Endothelial cell of umbilical vein (primary cell): ENCODE measurements at regions of chr12 and their contacts with region 1.

Region 1: DNA sequence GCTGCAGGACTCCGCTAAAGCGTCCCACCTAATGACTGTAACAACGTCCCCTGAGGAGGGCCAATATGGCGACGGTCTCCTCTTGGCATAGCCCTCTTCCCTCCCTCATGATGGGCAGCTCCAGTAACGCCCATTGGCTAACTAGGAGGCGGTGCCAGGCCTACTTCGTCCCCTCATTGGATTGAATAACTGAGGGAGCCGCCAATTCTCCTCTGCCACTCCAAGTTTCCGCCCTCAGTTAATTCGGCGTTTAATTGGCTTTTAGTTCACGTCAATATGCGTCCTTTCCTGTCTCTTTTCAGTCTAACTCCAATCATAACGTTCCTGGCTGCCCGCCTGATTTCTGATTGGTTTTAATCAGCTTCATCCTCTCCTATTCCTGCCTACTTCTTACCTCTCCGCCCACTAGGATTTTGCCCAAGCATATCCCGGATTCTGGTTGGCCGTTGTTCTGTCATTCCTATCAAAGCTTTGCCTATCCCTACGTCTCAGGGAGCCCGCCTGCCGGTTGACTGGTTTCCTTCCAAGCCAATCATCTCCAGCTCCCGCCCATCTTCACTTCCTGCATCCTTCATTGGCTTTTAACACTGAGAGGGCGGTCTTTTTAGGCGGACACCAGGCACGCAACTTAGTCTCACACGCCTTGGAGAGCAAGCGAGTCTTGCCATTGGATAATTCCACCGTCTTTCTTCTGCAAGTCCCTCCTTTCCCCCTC is 430 bp upstream of the SP1 start:
- DNase-seq: peak; percentile 100
- H3K4me3 ChIP-seq: peak overlapping the region; percentile 4 to 55 (median 47)
- H3K27ac ChIP-seq: peak overlapping the region; percentile 58
- H3K4me1 ChIP-seq: peaks cover 30% of the 10 kb centered on the region
- H3K27me3 ChIP-seq: no peaks in the 10 kb centered on the region
- CTCF ChIP-seq: no peak
- POLR2A ChIP-seq: peak; percentile 90

Region 2: GRCh38 chr12:53190108-53190729 is 189.3 kb before region 1 on chr12:
- CTCF ChIA-PET with region 1: no interaction called
- POLR2A ChIA-PET with region 1: no interaction called
- dilution Hi-C with region 1: no loop called
- intact Hi-C with region 1: no loop called
- DNase-seq: peak; percentile 49
- H3K4me3 ChIP-seq: no peak overlapping the region
- H3K27ac ChIP-seq: no peak overlapping the region
- H3K4me1 ChIP-seq: peaks cover 4% of the 10 kb centered on the region
- H3K27me3 ChIP-seq: no peaks in the 10 kb centered on the region
- CTCF ChIP-seq: peak; percentile 73 to 86
- POLR2A ChIP-seq: no peak

Region 3: DNA sequence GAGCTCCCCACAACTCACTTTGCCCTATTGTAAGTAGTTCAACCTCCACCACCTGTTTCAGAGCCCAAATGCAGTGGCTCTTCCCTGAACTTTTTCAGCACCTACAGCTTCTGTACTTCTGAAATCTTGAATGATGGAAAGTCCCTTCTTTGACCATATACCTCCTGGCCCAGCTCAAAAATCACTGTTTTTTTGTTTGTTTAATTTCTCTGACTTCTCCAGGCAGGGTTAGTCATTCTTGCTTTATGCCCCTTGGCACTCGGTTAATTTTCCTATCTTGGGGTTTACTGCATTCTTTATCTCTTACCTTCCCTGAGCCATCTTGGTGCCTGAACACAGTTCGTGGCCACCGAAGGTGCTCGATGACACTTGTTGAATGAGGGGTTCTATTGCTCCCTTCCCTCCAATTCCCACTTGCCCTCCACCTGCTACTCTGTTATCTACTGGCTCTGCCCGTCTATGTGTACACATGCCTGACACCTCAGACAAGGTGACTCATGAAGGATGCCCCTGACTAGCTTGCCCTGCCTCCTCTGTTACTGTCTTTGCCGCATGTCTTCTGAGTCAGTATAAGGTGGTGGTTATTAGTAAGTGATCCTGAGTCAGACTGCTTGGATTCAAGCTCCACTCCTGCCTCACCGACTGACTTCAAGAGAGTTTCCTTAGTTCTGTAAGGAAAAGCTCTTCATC is 48.5 kb after region 1 on chr12:
- CTCF ChIA-PET with region 1: interaction called, 44 read pairs
- POLR2A ChIA-PET with region 1: no interaction called
- dilution Hi-C with region 1: no loop called
- intact Hi-C with region 1: no loop called
- DNase-seq: no peak
- H3K4me3 ChIP-seq: no peak overlapping the region
- H3K27ac ChIP-seq: no peak overlapping the region
- H3K4me1 ChIP-seq: no peaks in the 10 kb centered on the region
- H3K27me3 ChIP-seq: no peaks in the 10 kb centered on the region
- CTCF ChIP-seq: no peak
- POLR2A ChIP-seq: no peak

Region 4: GRCh38 chr12:53441040-53441833 is 61.7 kb after region 1 on chr12 and contains the start of gene PRR13:
- CTCF ChIA-PET with region 1: interaction called, 3 read pairs
- POLR2A ChIA-PET with region 1: interaction called, 4 read pairs
- dilution Hi-C with region 1: no loop called
- intact Hi-C with region 1: loop called (anchors 1 kb)
- DNase-seq: peak; percentile 99
- H3K4me3 ChIP-seq: peak within 1 kb of the TSS; percentile 65 to 99 (median 96)
- H3K27ac ChIP-seq: peak within 1 kb of the TSS; percentile 65
- H3K4me1 ChIP-seq: peaks cover 12% of the 10 kb centered on the region
- H3K27me3 ChIP-seq: no peaks in the 10 kb centered on the region
- CTCF ChIP-seq: no peak
- POLR2A ChIP-seq: peak; percentile 94
- total RNA-seq, gene PRR13: 123 and 139 TPM in 2 replicates